ENCODE measurements at regions of chr3 and their contacts with region 1.

Region 1: GRCh38 chr3:31768479-31769123 is 212.5 kb downstream of the OSBPL10 start:
- DNase-seq: peak; percentile 16 to 69 (median 42)
- ATAC-seq: no peak
- H3K4me3 ChIP-seq: no peak overlapping the region
- H3K4me3 Mint-ChIP-seq: no peak overlapping the region
- H3K27ac ChIP-seq: no peak overlapping the region
- H3K27ac Mint-ChIP-seq: no peak overlapping the region
- H3K4me1 ChIP-seq: no peaks in the 10 kb centered on the region
- H3K4me1 Mint-ChIP-seq: no peaks in the 10 kb centered on the region
- H3K27me3 ChIP-seq: no peaks in the 10 kb centered on the region
- H3K27me3 Mint-ChIP-seq: no peaks in the 10 kb centered on the region
- CTCF ChIP-seq: peak; percentile 71

Region 2: GRCh38 chr3:30012941-30013543 is 1755.6 kb before region 1 on chr3:
- CTCF ChIA-PET with region 1: no interaction called
- POLR2A ChIA-PET with region 1: no interaction called
- intact Hi-C with region 1: loop called in 1 of 2 experiments (anchors 10 kb)
- DNase-seq: peak in 13 of 14 experiments; percentile 2 to 67 (median 31)
- ATAC-seq: peak; percentile 48
- H3K4me3 ChIP-seq: no peak overlapping the region
- H3K4me3 Mint-ChIP-seq: no peak overlapping the region
- H3K27ac ChIP-seq: no peak overlapping the region
- H3K27ac Mint-ChIP-seq: no peak overlapping the region
- H3K4me1 ChIP-seq: no peaks in the 10 kb centered on the region
- H3K4me1 Mint-ChIP-seq: no peaks in the 10 kb centered on the region
- H3K27me3 ChIP-seq: no peaks in the 10 kb centered on the region
- H3K27me3 Mint-ChIP-seq: no peaks in the 10 kb centered on the region
- CTCF ChIP-seq: peak; percentile 65

Region 3: DNA sequence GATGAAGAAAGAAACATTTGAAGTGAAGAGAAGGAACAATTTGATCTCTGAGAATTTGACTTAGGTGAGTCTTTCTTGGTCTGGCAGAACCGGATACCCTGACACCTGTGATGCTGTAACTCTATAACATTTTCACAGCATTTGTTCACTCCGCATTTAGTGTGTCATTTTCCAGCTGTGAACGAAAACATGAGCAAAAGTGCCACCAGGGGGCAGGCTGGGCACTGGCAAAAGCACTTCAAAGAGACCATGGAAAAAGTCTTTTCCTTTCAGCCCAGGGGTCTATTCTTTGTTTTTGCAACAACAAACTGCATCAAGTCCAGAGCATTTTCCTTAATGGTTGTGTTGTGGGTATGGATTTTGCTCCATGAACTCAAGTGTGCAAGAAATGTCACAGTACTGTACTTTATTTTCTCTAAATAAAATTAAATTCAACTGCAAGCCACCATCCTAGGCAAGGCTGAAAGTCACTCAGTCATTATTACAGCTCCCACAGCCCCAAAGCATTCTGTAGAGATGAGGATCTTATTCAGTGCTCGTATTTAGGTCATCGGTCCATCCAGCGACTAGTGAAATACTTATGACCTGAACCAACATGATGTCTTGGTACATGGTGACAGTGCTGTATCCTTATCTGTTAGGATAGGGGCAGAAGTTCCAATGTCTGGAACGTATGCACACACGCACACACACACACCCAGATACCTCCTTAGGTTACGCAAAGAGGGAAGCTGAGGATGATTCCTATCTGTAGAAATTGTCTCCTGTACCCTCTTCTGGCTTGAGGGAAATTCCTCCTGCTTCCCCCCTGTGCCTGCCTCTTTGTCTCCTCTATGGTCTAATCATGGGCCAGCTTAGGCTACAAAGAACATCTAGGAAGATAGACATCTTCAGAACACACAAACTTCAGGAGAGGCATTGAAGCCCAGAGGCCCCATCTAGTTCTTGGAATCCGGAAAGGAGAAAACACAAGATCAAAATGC is 999.6 kb before region 1 on chr3:
- CTCF ChIA-PET with region 1: interaction called, 7 read pairs
- POLR2A ChIA-PET with region 1: no interaction called
- intact Hi-C with region 1: loop called (anchors 1 kb)
- DNase-seq: peak; percentile 49 to 78 (median 64)
- ATAC-seq: peak; percentile 60
- H3K4me3 ChIP-seq: no peak overlapping the region
- H3K4me3 Mint-ChIP-seq: no peak overlapping the region
- H3K27ac ChIP-seq: no peak overlapping the region
- H3K27ac Mint-ChIP-seq: no peak overlapping the region
- H3K4me1 ChIP-seq: no peaks in the 10 kb centered on the region
- H3K4me1 Mint-ChIP-seq: peaks cover 5% of the 10 kb centered on the region
- H3K27me3 ChIP-seq: no peaks in the 10 kb centered on the region
- H3K27me3 Mint-ChIP-seq: peaks cover 9% of the 10 kb centered on the region
- CTCF ChIP-seq: peak; percentile 83

Region 4: GRCh38 chr3:30934208-30934550 is 834.4 kb before region 1 on chr3:
- CTCF ChIA-PET with region 1: no interaction called
- POLR2A ChIA-PET with region 1: no interaction called
- intact Hi-C with region 1: loop called in 1 of 2 experiments (anchors 5 kb)
- DNase-seq: peak in 4 of 14 experiments; percentile 8 to 39 (median 27)
- ATAC-seq: no peak
- H3K4me3 ChIP-seq: no peak overlapping the region
- H3K4me3 Mint-ChIP-seq: no peak overlapping the region
- H3K27ac ChIP-seq: no peak overlapping the region
- H3K27ac Mint-ChIP-seq: no peak overlapping the region
- H3K4me1 ChIP-seq: no peaks in the 10 kb centered on the region
- H3K4me1 Mint-ChIP-seq: peaks cover 9% of the 10 kb centered on the region
- H3K27me3 ChIP-seq: no peaks in the 10 kb centered on the region
- H3K27me3 Mint-ChIP-seq: no peaks in the 10 kb centered on the region
- CTCF ChIP-seq: peak; percentile 31

Region 5: DNA sequence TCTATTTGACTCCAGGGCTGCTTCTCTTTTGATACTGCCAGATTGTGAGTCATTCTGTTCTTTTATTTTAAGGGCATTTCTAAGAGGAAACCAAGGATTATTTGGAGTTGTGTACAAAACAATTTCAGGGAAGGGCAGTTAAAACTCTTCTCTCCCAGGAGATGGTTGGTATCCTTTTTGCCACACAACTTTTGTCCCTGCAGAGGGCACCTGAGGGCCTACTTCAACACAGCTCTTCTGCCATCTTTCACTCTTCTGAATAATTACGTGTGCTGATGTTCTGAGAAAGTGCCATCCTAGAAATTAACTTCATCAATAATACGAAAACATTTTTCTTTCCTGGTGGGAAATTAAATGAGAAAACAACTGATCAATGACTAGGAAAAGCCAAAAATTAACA is 798.4 kb before region 1 on chr3:
- CTCF ChIA-PET with region 1: no interaction called
- POLR2A ChIA-PET with region 1: no interaction called
- intact Hi-C with region 1: loop called in 1 of 2 experiments (anchors 5 kb)
- DNase-seq: peak in 6 of 14 experiments; percentile 1 to 43 (median 16)
- ATAC-seq: no peak
- H3K4me3 ChIP-seq: no peak overlapping the region
- H3K4me3 Mint-ChIP-seq: no peak overlapping the region
- H3K27ac ChIP-seq: no peak overlapping the region
- H3K27ac Mint-ChIP-seq: no peak overlapping the region
- H3K4me1 ChIP-seq: no peaks in the 10 kb centered on the region
- H3K4me1 Mint-ChIP-seq: no peaks in the 10 kb centered on the region
- H3K27me3 ChIP-seq: no peaks in the 10 kb centered on the region
- H3K27me3 Mint-ChIP-seq: no peaks in the 10 kb centered on the region
- CTCF ChIP-seq: peak; percentile 25

Measured in CD4-positive, alpha-beta T cell (primary cell).